Ascending aorta (tissue), 2 donors: ENCODE measurements at regions of chr10 and their contacts with region 1.

Region 1: GRCh38 chr10:123043409-123043925 is 34.7 kb downstream of the ACADSB start:
- DNase-seq: no peak
- H3K4me3 ChIP-seq: no peak overlapping the region
- H3K27ac ChIP-seq: no peak overlapping the region
- H3K4me1 ChIP-seq: no peaks in the 10 kb centered on the region
- H3K27me3 ChIP-seq: no peaks in the 10 kb centered on the region
- CTCF ChIP-seq: peak in 1 of 3 experiments; percentile 37

Region 2: DNA sequence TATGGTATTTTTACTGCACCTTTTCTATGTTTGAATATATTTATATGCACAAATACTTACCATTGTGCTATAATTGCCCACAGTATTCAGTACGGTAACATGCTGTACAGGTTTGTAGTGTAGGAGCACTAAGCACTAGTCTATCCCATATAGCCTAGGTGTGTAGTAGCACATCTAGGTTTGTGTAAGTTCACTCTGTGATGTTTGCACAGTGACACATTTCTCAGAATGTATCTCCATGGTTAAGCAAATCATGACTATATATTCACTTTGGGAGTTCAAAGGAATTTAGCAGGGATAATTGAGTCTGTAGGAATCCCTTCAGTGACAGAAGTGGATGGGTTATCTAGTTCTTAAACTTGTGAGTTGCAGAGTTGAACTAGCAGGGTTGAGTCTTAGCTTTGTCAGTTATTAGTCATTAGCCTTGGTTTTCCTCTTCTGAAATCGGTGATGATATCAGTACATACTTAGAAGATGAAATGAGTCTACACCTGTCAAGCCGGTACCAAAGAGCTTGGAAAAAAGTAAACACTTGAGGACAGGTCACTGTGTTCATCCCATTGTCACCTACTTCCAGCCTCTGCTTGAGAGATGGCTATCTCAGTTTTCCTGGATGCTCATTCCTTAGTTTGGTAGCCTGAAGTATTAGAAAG is 184.1 kb after region 1 on chr10:
- intact Hi-C with region 1: no loop called
- DNase-seq: no peak
- H3K4me3 ChIP-seq: no peak overlapping the region
- H3K27ac ChIP-seq: no peak overlapping the region
- H3K4me1 ChIP-seq: no peaks in the 10 kb centered on the region
- H3K27me3 ChIP-seq: no peaks in the 10 kb centered on the region
- CTCF ChIP-seq: no peak

Region 3: DNA sequence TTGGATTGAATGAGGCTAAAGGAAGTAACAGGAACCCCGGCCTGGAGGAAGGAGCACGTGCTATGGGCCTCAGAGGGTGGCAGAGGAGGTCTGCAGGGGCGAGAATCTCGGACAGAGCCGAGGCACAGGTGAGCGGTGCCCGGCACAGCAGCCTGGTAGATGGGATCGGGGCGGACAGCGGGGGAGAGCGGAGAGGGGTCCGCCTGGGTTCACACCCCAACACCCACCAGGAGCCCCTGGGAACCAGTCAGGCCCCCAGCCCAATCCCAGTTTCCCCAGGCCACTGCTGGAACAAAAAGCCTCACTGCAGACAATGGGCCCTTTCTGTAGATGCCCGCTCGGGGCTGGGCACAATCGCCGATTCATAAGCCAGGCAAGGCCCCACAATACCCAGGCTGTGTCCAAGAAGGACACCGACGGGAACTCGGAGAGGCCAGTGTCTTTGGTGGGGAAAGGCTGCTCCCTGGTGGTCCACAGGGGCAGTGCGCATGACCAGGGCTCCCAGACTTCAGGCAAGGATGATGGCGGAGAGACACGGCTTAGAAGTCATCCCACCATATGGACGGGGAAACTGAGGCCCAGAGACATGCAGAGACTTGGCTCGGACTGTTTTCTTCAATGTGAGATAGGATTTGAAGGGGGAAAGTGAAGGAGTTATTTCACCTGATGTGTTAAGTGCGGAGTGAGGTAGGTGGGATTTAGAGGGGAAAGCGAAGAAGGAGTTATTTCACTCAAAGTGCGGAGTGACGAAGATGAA is 515.8 kb after region 1 on chr10:
- intact Hi-C with region 1: loop called (anchors 5 kb)
- DNase-seq: peak in 1 of 2 donors; percentile 73
- H3K4me3 ChIP-seq: no peak overlapping the region
- H3K27ac ChIP-seq: no peak overlapping the region
- H3K4me1 ChIP-seq: no peaks in the 10 kb centered on the region
- H3K27me3 ChIP-seq: no peaks in the 10 kb centered on the region
- CTCF ChIP-seq: peak; percentile 85 to 97 (median 95)